A673 (cell line): ENCODE measurements at regions of chr3 and their contacts with region 1.

Region 1: DNA sequence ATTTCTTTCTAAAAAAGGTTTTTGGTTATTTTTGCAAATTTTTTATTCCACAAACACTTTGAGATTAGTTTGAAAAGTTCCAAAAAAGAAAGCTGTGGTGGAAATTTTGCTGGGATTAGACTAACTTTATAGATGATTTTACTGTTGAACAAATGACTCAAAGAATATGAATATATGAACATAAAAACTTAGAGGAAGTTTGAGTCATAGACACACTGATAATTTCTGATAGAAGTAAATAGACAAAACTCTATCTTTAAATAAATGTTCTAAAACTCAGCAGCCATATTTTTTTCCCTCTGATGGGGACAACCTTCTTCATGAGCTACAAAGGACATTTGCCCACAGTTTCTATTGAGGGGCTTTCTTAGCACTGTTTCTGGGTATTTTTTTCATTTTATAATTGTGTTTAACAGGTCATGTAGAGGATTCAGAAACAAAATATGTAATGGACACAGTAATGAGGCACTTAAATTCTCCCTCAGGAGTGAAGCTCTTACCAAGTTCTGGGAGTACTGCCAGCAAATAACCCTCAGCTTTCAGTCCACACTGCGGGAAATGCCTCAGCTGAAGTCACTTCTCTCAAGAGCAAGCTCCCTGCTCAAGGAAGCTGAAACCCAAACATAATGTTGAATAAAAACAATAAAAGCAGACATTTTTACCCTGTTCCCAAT is 157.6 kb downstream of the NFKBIZ start:
- DNase-seq: peak; percentile 94
- H3K4me3 ChIP-seq: no peak overlapping the region
- H3K27ac ChIP-seq: no peak overlapping the region
- H3K4me1 ChIP-seq: peaks cover 17% of the 10 kb centered on the region
- H3K27me3 ChIP-seq: no peaks in the 10 kb centered on the region
- CTCF ChIP-seq: no peak

Region 2: GRCh38 chr3:102089904-102090492 is 83.0 kb after region 1 on chr3:
- CTCF ChIA-PET with region 1: no interaction called
- POLR2A ChIA-PET with region 1: interaction called, 12 read pairs
- intact Hi-C with region 1: no loop called
- DNase-seq: peak; percentile 84
- H3K4me3 ChIP-seq: no peak overlapping the region
- H3K27ac ChIP-seq: peak overlapping the region; percentile 20
- H3K4me1 ChIP-seq: peaks cover 30% of the 10 kb centered on the region
- H3K27me3 ChIP-seq: no peaks in the 10 kb centered on the region
- CTCF ChIP-seq: no peak